A673 (cell line): ENCODE measurements at regions of chr1 and their contacts with region 1.

Region 1: GRCh38 chr1:47388891-47389238 is 27.2 kb upstream of the FOXE3 start:
- DNase-seq: peak; percentile 66
- H3K4me3 ChIP-seq: no peak overlapping the region
- H3K27ac ChIP-seq: no peak overlapping the region
- H3K4me1 ChIP-seq: no peaks in the 10 kb centered on the region
- H3K27me3 ChIP-seq: peaks cover 12% of the 10 kb centered on the region
- CTCF ChIP-seq: peak; percentile 79

Region 2: DNA sequence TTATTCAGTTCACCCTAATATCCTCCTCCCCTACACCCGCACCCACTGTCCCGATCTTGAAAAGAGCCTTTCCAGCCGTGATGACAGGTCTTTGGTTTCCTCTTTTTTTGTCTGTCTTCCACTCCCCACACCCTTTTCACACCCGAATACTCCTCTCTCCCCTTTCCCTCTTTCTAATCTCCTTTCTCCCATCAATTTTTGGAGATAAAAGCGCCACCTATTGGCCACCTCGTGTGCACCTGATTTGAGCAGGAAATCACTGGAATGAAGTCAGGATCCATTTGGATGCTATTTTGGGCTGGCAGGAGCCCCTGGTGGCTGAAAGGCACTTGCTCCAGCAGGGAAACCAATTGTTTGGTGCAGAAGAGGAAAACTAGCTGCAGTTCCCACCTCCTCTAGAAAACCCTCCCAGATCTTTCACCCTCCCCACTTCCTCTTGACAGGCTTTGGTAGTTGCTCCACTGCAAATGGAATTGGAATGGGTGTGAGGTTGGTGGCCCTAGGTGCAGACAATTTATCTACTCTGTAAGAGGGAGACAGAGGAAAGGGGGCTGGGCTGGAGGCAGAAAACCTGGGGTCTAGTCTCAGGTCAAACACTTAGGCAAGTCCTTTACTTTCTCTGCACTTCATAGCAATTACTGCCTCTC is 35.6 kb after region 1 on chr1:
- CTCF ChIA-PET with region 1: interaction called, 3 read pairs
- POLR2A ChIA-PET with region 1: no interaction called
- intact Hi-C with region 1: loop called (anchors 5 kb)
- DNase-seq: peak; percentile 81
- H3K4me3 ChIP-seq: no peak overlapping the region
- H3K27ac ChIP-seq: no peak overlapping the region
- H3K4me1 ChIP-seq: no peaks in the 10 kb centered on the region
- H3K27me3 ChIP-seq: peaks cover 23% of the 10 kb centered on the region
- CTCF ChIP-seq: peak; percentile 91

Region 3: DNA sequence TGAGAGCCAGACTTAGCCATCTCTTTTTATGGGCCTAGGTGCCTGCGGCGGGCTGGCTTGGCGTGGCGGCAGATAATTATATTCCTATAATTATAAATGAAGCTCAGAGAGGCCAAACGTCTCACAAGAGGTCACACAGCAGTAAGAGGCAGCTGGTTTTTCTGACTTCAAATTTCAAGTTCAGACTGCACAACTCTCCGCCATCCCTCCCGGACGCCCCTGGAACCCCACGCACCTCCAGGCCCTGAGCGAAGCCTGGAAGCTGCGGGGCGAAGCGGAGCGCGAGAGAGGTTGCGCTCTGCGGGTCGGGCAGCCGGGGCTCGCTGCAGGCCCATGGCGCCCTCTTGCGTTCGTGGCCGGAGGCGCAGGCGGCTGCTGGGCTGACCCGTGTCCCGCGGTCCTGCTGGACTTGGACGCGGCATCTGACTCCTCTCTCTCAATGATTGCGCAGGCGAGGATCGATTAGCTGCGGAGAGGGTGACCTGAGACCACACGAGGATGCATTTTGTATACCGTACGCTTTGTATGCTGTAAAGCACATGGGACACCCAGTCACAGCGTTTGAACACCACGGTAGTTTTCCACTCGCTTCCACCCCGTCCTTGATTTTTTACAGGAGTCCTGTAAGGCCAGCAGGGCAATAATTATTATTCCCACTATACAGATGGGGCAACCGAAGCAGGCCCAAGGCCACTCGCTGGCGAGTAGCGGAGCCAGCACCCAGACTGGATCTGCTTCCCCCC is 321.6 kb after region 1 on chr1:
- CTCF ChIA-PET with region 1: interaction called, 8 read pairs
- POLR2A ChIA-PET with region 1: no interaction called
- intact Hi-C with region 1: loop called (anchors 2 kb)
- DNase-seq: peak; percentile 58
- H3K4me3 ChIP-seq: peak overlapping the region; percentile 34
- H3K27ac ChIP-seq: no peak overlapping the region
- H3K4me1 ChIP-seq: peaks cover 17% of the 10 kb centered on the region
- H3K27me3 ChIP-seq: peaks cover 95% of the 10 kb centered on the region
- CTCF ChIP-seq: peak; percentile 97

Region 4: DNA sequence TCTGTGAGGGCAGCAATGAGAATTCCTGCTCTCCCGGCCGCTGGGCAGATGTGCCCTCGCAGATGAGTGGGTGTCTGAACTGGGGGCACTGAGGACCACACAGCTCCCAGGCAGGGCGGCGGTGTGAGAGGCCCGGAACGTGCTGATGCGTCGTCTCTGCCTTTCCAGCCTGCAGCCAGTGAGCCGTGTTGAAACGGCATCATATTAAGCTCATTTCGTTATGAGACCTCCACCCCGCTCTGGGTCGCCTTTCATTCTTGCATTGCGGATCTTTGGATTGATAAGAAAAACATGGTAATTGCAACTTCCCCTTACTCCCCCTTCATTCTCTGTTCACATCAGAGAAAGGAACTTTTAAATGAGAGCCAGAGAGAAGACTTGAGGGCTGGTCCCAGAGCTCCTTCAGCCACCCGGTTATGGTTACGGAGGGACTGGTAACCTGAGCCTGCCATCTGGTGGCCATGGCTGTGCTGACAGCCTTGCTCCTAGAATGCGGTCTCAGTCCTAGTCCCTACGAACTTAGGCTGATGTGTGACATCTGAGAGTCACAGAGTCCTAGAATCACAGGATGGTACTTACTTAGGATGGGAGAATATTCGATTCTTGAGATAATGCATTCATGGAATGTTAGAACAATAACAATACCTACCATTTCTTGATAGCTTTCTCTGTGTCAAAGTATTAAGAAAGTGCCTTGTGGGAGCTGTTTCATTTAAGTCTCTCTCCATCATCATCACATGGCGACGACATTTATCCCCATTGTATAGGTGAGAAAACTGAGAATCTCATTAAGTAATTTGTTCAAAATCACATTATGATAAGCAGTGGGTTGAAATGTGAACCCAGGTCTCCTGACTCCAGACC is 337.4 kb after region 1 on chr1:
- CTCF ChIA-PET with region 1: interaction called, 13 read pairs
- POLR2A ChIA-PET with region 1: no interaction called
- intact Hi-C with region 1: loop called (anchors 1 kb)
- DNase-seq: peak; percentile 81
- H3K4me3 ChIP-seq: no peak overlapping the region
- H3K27ac ChIP-seq: no peak overlapping the region
- H3K4me1 ChIP-seq: no peaks in the 10 kb centered on the region
- H3K27me3 ChIP-seq: peaks cover 33% of the 10 kb centered on the region
- CTCF ChIP-seq: peak; percentile 91

Region 5: DNA sequence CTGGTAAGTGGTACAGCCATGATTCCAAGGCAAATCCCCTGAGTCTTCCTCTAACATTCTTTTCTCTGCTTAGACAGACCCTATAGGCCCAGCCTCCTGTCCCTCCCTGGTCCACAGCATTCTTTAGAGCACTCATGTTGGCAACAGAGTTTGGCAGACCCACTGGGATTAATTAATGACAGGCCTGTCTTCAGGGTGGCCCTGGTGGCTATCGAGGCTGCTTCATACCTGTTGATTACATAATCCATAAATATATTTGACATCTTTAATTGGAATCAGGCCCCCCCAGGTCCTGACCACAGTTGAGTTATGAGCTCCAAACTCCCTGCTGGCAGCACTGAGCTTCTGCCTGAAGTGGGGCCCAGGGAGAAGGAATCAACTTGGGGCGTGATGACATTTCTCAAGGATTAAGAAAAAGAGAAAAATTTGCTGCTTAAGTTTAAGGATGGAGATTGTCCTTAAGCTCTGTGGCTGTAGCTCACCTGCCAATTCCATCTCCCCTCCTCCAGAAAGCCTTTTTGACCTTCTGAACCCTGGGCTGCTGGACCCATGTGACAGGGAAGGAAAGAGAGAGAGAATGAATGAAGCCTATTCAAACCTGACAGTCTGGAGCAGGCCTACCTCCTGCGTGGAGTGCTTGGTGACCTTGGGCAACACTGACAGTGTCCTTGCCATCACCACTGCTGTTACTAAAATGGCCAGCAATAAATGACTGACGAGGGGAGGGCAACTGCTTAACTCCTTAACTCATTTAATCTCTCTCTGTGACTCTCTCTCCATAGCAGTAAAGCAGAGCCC is 451.7 kb after region 1 on chr1:
- CTCF ChIA-PET with region 1: no interaction called
- POLR2A ChIA-PET with region 1: no interaction called
- intact Hi-C with region 1: no loop called
- DNase-seq: no peak
- H3K4me3 ChIP-seq: no peak overlapping the region
- H3K27ac ChIP-seq: no peak overlapping the region
- H3K4me1 ChIP-seq: no peaks in the 10 kb centered on the region
- H3K27me3 ChIP-seq: peaks cover 4% of the 10 kb centered on the region
- CTCF ChIP-seq: no peak